GM23248 (cell line): ENCODE measurements at regions of chr7 and their contacts with region 1.

Region 1: GRCh38 chr7:25851332-25852210 is 300.4 kb upstream of the NFE2L3 start:
- DNase-seq: peak; percentile 91
- H3K4me3 ChIP-seq: peak overlapping the region; percentile 64
- H3K27ac ChIP-seq: no peak overlapping the region
- H3K4me1 ChIP-seq: peaks cover 82% of the 10 kb centered on the region
- H3K27me3 ChIP-seq: no peaks in the 10 kb centered on the region

Region 2: DNA sequence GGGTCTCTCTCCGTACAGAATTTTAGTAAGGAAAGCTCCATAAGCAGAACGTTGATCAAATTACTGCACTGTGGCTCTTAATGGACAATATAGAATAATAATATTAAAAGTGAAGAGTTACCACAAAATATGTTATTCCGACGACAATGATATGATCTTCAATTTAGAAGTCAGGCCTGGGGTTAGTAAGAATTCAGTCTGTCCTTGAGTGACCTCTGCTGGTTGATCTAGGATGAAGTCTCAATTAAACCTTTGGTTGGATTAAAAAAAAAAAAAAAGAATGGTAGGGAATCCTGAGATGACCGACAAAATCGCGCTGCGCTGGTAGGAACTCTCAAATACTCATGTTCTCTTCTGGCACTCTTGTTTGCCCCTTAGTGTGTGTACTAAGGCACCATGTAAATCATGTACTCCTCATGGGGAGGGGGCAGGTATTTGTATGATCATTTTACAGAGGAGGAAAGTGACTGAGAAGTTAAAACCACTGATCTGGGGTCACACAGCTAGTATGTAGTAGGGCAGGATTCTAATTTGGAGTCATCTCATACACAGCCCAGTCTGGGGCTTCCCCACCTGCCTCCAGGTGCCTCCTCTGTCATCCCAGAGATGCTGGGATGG is 462.0 kb before region 1 on chr7:
- in situ Hi-C with region 1: loop called (anchors 5 kb)
- DNase-seq: peak; percentile 68
- H3K4me3 ChIP-seq: no peak overlapping the region
- H3K27ac ChIP-seq: no peak overlapping the region
- H3K4me1 ChIP-seq: no peaks in the 10 kb centered on the region
- H3K27me3 ChIP-seq: peaks cover 5% of the 10 kb centered on the region; the same call in 1 of the 2 replicates

Region 3: DNA sequence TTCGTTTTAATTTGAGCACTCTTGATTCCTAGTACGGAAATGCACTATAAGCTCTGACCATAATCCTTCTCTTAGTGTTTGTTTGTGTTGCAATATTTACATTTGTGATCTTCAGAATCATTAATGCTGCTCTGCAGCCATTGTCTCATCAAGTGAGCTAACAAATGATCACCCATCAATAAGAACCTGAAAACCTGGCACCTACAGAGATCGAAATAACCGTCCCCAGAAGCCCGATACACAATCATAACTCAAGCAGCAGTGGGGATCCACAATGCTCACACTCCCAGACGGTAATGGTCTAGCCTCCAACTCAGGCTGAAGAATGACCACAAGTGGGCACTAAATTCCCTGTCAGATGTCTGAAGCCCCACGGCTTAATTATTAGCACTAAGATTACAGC is 144.4 kb after region 1 on chr7:
- in situ Hi-C with region 1: no loop called
- DNase-seq: no peak
- H3K4me3 ChIP-seq: no peak overlapping the region
- H3K27ac ChIP-seq: no peak overlapping the region
- H3K4me1 ChIP-seq: no peaks in the 10 kb centered on the region
- H3K27me3 ChIP-seq: no peaks in the 10 kb centered on the region

Region 4: GRCh38 chr7:26466969-26467529 is 615.5 kb after region 1 on chr7:
- in situ Hi-C with region 1: no loop called
- DNase-seq: no peak
- H3K4me3 ChIP-seq: no peak overlapping the region
- H3K27ac ChIP-seq: no peak overlapping the region
- H3K4me1 ChIP-seq: no peaks in the 10 kb centered on the region
- H3K27me3 ChIP-seq: no peaks in the 10 kb centered on the region

Region 5: DNA sequence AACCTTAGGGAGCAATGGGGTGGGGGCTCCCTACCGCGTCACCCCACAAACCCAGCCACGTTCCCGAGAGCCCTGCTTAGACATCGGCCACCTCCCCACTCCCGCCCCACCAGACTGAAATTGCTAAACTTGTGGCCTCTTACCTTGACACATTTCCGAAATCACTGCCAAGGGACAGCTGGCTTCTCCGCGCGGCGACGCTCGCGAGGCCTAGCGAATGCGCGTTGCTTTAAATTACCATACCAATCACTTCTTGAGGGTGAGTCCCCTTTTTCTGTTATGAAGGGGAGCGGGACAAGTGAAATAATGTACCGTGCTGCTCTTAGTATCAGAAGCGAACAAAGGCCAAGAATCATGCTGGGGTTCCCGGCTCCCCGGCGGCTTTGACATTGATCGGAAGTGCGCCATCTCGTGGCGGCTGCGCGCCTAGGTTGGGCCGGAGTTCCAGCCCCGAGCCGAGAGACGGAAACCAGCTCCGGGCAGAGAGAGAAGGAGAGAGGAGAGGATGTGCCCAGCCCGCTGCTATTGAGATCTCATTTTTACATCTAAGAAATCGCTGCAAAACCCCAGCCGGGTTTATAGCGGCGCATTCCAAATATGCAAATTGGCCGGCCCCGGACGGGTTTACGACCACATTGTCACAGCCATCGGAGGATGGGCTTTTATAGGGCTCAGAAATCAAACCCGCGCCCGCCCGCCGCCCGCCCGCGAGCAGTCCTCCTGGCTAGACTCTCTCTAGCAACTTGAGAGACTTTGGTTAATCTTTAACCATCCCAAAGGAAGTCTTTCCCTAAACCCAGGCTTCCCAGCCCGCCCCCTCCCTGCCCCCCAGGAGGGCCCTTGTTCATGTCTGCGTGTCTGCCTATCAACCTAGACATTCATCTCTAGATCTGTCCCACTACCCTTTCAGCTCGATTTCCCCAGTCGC is 1328.2 kb after region 1 on chr7:
- in situ Hi-C with region 1: loop called (anchors 10 kb)
- DNase-seq: peak; percentile 94
- H3K4me3 ChIP-seq: peak overlapping the region; percentile 83
- H3K27ac ChIP-seq: peak overlapping the region; percentile 99
- H3K4me1 ChIP-seq: peaks cover 58% of the 10 kb centered on the region
- H3K27me3 ChIP-seq: no peaks in the 10 kb centered on the region